Endothelial cell of umbilical vein (primary cell): ENCODE measurements at regions of chrX and their contacts with region 1.

Region 1: DNA sequence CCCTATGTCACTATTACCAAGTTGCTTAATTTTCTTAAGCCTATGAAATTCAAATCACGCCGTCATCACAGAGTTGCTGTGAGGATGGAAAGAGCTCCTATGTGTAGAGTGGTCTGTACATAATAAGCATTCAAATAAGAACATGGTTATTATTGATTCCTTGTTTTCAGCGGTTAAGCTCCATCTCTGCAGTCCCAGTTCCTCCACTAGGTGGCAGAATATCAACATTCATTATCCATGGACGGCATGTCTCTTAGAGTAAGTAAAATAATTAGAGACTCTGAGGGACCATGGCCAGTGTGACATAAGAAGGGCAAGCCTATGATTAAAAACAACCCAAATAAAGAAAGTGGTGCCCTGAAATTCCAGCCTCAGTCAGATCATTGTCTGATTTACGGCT is 132.5 kb upstream of the NHS start:
- DNase-seq: peak; percentile 62
- H3K4me3 ChIP-seq: no peak overlapping the region
- H3K27ac ChIP-seq: no peak overlapping the region
- H3K4me1 ChIP-seq: no peaks in the 10 kb centered on the region
- H3K27me3 ChIP-seq: no peaks in the 10 kb centered on the region
- CTCF ChIP-seq: peak; percentile 36
- POLR2A ChIP-seq: no peak

Region 2: DNA sequence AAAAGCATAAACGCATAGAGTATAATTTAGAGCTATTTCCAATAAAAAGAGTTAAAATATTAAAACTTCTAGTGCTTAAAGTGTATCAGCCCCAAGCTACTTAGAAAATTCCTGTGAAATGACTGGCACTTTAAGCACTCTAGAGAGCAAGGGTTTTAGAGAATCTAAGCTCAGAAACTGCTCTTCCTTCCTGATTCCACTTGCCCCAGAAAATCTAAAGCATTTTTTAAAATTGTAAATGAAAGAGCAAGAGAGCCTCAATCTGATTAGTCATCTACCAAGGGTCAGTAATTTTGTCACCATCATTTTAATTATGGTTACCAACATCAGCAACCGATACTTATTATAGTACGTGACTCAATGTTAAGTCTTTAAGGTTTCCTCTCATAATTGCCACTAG is 555.0 kb before region 1 on chrX:
- CTCF ChIA-PET with region 1: no interaction called
- POLR2A ChIA-PET with region 1: no interaction called
- dilution Hi-C with region 1: no loop called
- intact Hi-C with region 1: no loop called
- DNase-seq: no peak
- H3K4me3 ChIP-seq: no peak overlapping the region
- H3K27ac ChIP-seq: no peak overlapping the region
- H3K4me1 ChIP-seq: no peaks in the 10 kb centered on the region
- H3K27me3 ChIP-seq: no peaks in the 10 kb centered on the region
- CTCF ChIP-seq: no peak
- POLR2A ChIP-seq: no peak

Region 3: GRCh38 chrX:17535229-17535628 is 292.8 kb after region 1 on chrX:
- CTCF ChIA-PET with region 1: interaction called, 6 read pairs
- POLR2A ChIA-PET with region 1: no interaction called
- dilution Hi-C with region 1: no loop called
- intact Hi-C with region 1: loop called (anchors 5 kb)
- DNase-seq: peak; percentile 49
- H3K4me3 ChIP-seq: no peak overlapping the region
- H3K27ac ChIP-seq: no peak overlapping the region
- H3K4me1 ChIP-seq: no peaks in the 10 kb centered on the region
- H3K27me3 ChIP-seq: peaks cover 0 to 2% of the 10 kb centered on the region in 2 experiments
- CTCF ChIP-seq: peak; percentile 45 to 51
- POLR2A ChIP-seq: no peak

Region 4: GRCh38 chrX:17547658-17548057 is 305.2 kb after region 1 on chrX:
- CTCF ChIA-PET with region 1: no interaction called
- POLR2A ChIA-PET with region 1: no interaction called
- dilution Hi-C with region 1: no loop called
- intact Hi-C with region 1: no loop called
- DNase-seq: peak; percentile 90
- H3K4me3 ChIP-seq: no peak overlapping the region
- H3K27ac ChIP-seq: no peak overlapping the region
- H3K4me1 ChIP-seq: peaks cover 10% of the 10 kb centered on the region
- H3K27me3 ChIP-seq: no peaks in the 10 kb centered on the region
- CTCF ChIP-seq: no peak
- POLR2A ChIP-seq: no peak